ENCODE measurements at regions of chr14 and their contacts with region 1.

Region 1: DNA sequence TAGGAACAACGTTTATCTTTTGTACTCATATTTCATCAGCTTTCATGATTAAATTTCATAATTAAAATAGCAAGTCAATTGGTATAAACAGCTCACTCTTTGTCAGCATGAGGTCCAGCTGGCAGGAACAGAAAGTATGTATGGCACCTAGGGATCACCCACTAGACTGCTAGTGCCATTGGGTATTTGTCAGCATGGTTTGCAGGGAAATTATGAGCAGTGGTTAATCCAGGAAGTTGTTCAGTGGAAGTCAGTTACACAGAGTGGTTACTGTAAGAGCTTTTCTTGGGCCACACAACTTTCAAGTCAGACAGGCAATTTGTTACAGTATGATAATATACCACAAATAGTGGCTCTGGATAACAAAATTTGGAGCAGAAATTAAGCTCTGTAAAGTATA is 340.3 kb upstream of the RGS6 start:
- DNase-seq: no peak
- ATAC-seq: peak; percentile 91
- H3K4me3 ChIP-seq: no peak overlapping the region
- H3K27ac ChIP-seq: peak overlapping the region; percentile 61
- H3K4me1 ChIP-seq: peaks cover 13% of the 10 kb centered on the region
- H3K27me3 ChIP-seq: no peaks in the 10 kb centered on the region
- CTCF ChIP-seq: no peak
- EP300 ChIP-seq: no peak
- POLR2A ChIP-seq: no peak
- RAD21 ChIP-seq: no peak

Region 2: DNA sequence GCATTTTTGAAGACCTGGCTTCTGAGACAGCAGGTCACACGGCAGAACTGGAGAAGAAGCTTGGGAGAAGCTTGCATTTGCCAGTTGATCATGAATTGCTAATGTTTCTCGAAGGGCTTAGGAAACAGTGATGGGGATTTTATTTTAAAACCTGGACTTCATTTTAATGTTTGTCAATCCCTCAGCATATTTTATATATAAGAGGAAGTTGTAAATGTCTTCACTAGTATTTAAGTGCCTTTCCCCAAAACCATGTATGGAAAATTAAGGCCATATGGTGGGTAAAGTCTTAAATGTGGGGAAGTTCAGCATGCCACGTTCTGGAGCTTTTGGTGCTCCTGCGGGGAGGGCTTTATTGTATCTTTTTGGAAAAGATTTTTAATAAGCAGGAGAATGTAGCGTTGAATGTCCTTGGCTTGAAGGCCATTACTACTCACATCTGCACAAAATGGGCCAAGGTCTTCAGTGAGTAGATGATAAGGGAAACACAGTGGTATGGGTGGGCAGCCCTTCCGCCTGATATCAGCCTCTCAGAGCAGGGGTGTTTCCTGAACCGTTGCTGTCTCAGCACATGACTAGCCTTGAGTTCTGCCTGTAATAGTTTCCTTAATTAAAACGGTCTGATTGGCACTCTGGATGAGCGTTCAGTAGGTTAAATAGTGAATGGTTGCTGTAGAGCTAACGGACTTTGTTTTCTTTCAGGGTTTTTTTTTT is 173.2 kb before region 1 on chr14:
- CTCF ChIA-PET with region 1: no interaction called
- POLR2A ChIA-PET with region 1: no interaction called
- RAD21 ChIA-PET with region 1: no interaction called
- SMC1A ChIA-PET with region 1: no interaction called
- in situ Hi-C with region 1: no loop called
- intact Hi-C with region 1: no loop called
- DNase-seq: no peak
- ATAC-seq: no peak
- H3K4me3 ChIP-seq: no peak overlapping the region
- H3K27ac ChIP-seq: no peak overlapping the region
- H3K4me1 ChIP-seq: no peaks in the 10 kb centered on the region
- H3K27me3 ChIP-seq: no peaks in the 10 kb centered on the region
- CTCF ChIP-seq: no peak
- EP300 ChIP-seq: no peak
- POLR2A ChIP-seq: no peak
- RAD21 ChIP-seq: no peak

Region 3: GRCh38 chr14:71566276-71566675 is 25.7 kb before region 1 on chr14:
- CTCF ChIA-PET with region 1: interaction called, 5 read pairs
- POLR2A ChIA-PET with region 1: interaction called, 6 read pairs
- RAD21 ChIA-PET with region 1: interaction called, 4 read pairs
- SMC1A ChIA-PET with region 1: interaction called, 12 read pairs
- in situ Hi-C with region 1: no loop called
- intact Hi-C with region 1: no loop called
- DNase-seq: peak; percentile 81
- ATAC-seq: peak; percentile 85
- H3K4me3 ChIP-seq: no peak overlapping the region
- H3K27ac ChIP-seq: peak overlapping the region; percentile 80
- H3K4me1 ChIP-seq: peaks cover 22% of the 10 kb centered on the region
- H3K27me3 ChIP-seq: no peaks in the 10 kb centered on the region
- CTCF ChIP-seq: no peak
- EP300 ChIP-seq: peak in 1 of 2 experiments; percentile 65; a peak in 2 of 4 replicates
- POLR2A ChIP-seq: no peak
- RAD21 ChIP-seq: no peak

Region 4: DNA sequence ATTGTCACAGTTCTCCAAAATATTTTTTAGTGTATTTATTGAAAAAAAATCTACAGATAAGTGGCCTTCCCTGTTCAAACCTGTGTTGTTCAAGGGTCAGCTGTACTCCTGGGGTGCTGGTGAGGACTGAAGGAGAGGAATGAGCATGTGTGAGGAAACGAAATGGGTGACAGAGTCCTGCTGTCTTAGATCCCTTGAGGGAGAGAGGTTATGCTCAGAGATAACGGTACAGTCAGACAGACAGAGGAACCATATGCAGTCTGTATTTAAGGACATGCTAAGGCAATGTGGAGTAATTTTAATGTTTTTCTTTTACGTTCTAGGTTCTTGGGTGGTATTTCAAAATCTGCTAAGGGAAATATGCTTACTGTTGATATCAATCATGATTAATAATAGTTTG is 12.6 kb before region 1 on chr14:
- CTCF ChIA-PET with region 1: interaction called, 12 read pairs
- POLR2A ChIA-PET with region 1: interaction called, 5 read pairs
- RAD21 ChIA-PET with region 1: interaction called, 7 read pairs
- SMC1A ChIA-PET with region 1: interaction called, 28 read pairs
- in situ Hi-C with region 1: no loop called
- intact Hi-C with region 1: no loop called
- DNase-seq: no peak
- ATAC-seq: 0 out of 3 replicates have a peak, but pooled peaks have one; percentile 41
- H3K4me3 ChIP-seq: no peak overlapping the region
- H3K27ac ChIP-seq: no peak overlapping the region
- H3K4me1 ChIP-seq: peaks cover 4% of the 10 kb centered on the region; the same call in 1 of the 2 replicates
- H3K27me3 ChIP-seq: no peaks in the 10 kb centered on the region
- CTCF ChIP-seq: no peak
- EP300 ChIP-seq: no peak
- POLR2A ChIP-seq: no peak
- RAD21 ChIP-seq: no peak

Region 5: GRCh38 chr14:71606064-71606463 is 14.1 kb after region 1 on chr14:
- CTCF ChIA-PET with region 1: interaction called, 3 read pairs
- POLR2A ChIA-PET with region 1: interaction called, 7 read pairs
- RAD21 ChIA-PET with region 1: interaction called, 7 read pairs
- SMC1A ChIA-PET with region 1: interaction called, 18 read pairs
- in situ Hi-C with region 1: no loop called
- intact Hi-C with region 1: no loop called
- DNase-seq: no peak
- ATAC-seq: peak; percentile 14
- H3K4me3 ChIP-seq: no peak overlapping the region
- H3K27ac ChIP-seq: peak overlapping the region; percentile 77
- H3K4me1 ChIP-seq: peaks cover 23% of the 10 kb centered on the region
- H3K27me3 ChIP-seq: no peaks in the 10 kb centered on the region
- CTCF ChIP-seq: no peak
- EP300 ChIP-seq: no peak
- POLR2A ChIP-seq: no peak
- RAD21 ChIP-seq: no peak

Region 6: DNA sequence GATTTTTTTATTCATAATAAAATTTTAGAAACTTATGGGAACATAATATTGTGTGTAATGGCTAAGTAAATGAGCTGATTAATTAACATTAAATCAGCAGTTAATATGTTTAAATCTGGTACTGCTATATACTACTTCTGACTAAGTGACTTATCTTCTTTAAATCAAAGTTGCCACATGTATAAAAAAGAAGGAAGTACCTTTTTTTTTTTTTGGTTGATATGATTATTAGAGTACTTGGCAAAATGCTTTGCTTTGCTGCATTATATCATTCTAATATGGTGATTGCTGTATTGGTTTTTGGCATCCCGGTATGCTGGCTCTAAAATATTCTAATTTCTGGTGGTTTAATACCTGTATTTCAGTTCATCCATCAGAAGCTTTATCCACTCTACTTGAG is 21.2 kb after region 1 on chr14:
- CTCF ChIA-PET with region 1: interaction called, 3 read pairs
- POLR2A ChIA-PET with region 1: interaction called, 7 read pairs
- RAD21 ChIA-PET with region 1: interaction called, 11 read pairs
- SMC1A ChIA-PET with region 1: interaction called, 18 read pairs
- in situ Hi-C with region 1: no loop called
- intact Hi-C with region 1: no loop called
- DNase-seq: no peak
- ATAC-seq: no peak
- H3K4me3 ChIP-seq: no peak overlapping the region
- H3K27ac ChIP-seq: no peak overlapping the region
- H3K4me1 ChIP-seq: peaks cover 5% of the 10 kb centered on the region; the same call in 1 of the 2 replicates
- H3K27me3 ChIP-seq: no peaks in the 10 kb centered on the region
- CTCF ChIP-seq: no peak
- EP300 ChIP-seq: no peak
- POLR2A ChIP-seq: no peak
- RAD21 ChIP-seq: no peak

Region 7: GRCh38 chr14:71620401-71620800 is 28.5 kb after region 1 on chr14:
- CTCF ChIA-PET with region 1: no interaction called
- POLR2A ChIA-PET with region 1: interaction called, 3 read pairs
- RAD21 ChIA-PET with region 1: interaction called, 11 read pairs
- SMC1A ChIA-PET with region 1: interaction called, 13 read pairs
- in situ Hi-C with region 1: no loop called
- intact Hi-C with region 1: no loop called
- DNase-seq: no peak
- ATAC-seq: no peak
- H3K4me3 ChIP-seq: no peak overlapping the region
- H3K27ac ChIP-seq: peak overlapping the region; percentile 28; the same call in 1 of the 2 replicates
- H3K4me1 ChIP-seq: peaks cover 11% of the 10 kb centered on the region; the same call in 1 of the 2 replicates
- H3K27me3 ChIP-seq: no peaks in the 10 kb centered on the region
- CTCF ChIP-seq: no peak
- EP300 ChIP-seq: no peak
- POLR2A ChIP-seq: no peak
- RAD21 ChIP-seq: no peak

Region 8: GRCh38 chr14:71725922-71726579 is 134.1 kb after region 1 on chr14:
- CTCF ChIA-PET with region 1: no interaction called
- POLR2A ChIA-PET with region 1: no interaction called
- RAD21 ChIA-PET with region 1: no interaction called
- SMC1A ChIA-PET with region 1: no interaction called
- in situ Hi-C with region 1: no loop called
- intact Hi-C with region 1: no loop called
- DNase-seq: no peak
- ATAC-seq: no peak
- H3K4me3 ChIP-seq: no peak overlapping the region
- H3K27ac ChIP-seq: no peak overlapping the region
- H3K4me1 ChIP-seq: no peaks in the 10 kb centered on the region
- H3K27me3 ChIP-seq: no peaks in the 10 kb centered on the region
- CTCF ChIP-seq: no peak
- EP300 ChIP-seq: no peak
- POLR2A ChIP-seq: no peak
- RAD21 ChIP-seq: no peak

Measured in GM12878 (cell line).